ENCODE measurements at regions of chr18 and their contacts with region 1.

Region 1: GRCh38 chr18:56869189-56869777 is 218.1 kb downstream of the WDR7 start:
- DNase-seq: peak; percentile 15 to 52 (median 18)
- ATAC-seq: peak; percentile 53
- H3K4me3 ChIP-seq: no peak overlapping the region
- H3K27ac ChIP-seq: no peak overlapping the region
- H3K4me1 ChIP-seq: peaks cover 4% of the 10 kb centered on the region
- H3K27me3 ChIP-seq: no peaks in the 10 kb centered on the region
- CTCF ChIP-seq: peak; percentile 44 to 78 (median 72)
- POLR2A ChIP-seq: no peak

Region 2: GRCh38 chr18:57434536-57435494 is 565.5 kb after region 1 on chr18 and contains the start of gene ONECUT2:
- intact Hi-C with region 1: loop called (anchors 5 kb)
- DNase-seq: peak; percentile 95 to 98 (median 96)
- ATAC-seq: peak; percentile 97
- H3K4me3 ChIP-seq: peak within 1 kb of the TSS in 1 of 2 donors; percentile 39
- H3K27ac ChIP-seq: no peak within 1 kb of the TSS
- H3K4me1 ChIP-seq: peaks cover 64% of the 10 kb centered on the region
- H3K27me3 ChIP-seq: peaks cover 6 to 53% of the 10 kb centered on the region in 2 donors
- CTCF ChIP-seq: no peak
- POLR2A ChIP-seq: peak in 2 of 3 donors; percentile 31 to 36
- total RNA-seq, gene ONECUT2: 2.6 to 3.1 TPM

Measured in body of pancreas (tissue), 4 donors.